Dendritic cell treated with granulocyte-macrophage colony-stimulating factor and Interleukin-4, amounts not matched to agents 40 ng/mL and 50 ng/mL, for 4 days (primary cell): ENCODE measurements at regions of chr4 and their contacts with region 1.

Region 1: GRCh38 chr4:113761620-113762185 is at the start of gene CAMK2D:
- H3K4me3 Mint-ChIP-seq: peak within 1 kb of the TSS; percentile 94
- H3K27ac Mint-ChIP-seq: peak within 1 kb of the TSS; percentile 99
- H3K4me1 Mint-ChIP-seq: peaks cover 16% of the 10 kb centered on the region
- H3K27me3 Mint-ChIP-seq: peaks cover 12% of the 10 kb centered on the region

Region 2: DNA sequence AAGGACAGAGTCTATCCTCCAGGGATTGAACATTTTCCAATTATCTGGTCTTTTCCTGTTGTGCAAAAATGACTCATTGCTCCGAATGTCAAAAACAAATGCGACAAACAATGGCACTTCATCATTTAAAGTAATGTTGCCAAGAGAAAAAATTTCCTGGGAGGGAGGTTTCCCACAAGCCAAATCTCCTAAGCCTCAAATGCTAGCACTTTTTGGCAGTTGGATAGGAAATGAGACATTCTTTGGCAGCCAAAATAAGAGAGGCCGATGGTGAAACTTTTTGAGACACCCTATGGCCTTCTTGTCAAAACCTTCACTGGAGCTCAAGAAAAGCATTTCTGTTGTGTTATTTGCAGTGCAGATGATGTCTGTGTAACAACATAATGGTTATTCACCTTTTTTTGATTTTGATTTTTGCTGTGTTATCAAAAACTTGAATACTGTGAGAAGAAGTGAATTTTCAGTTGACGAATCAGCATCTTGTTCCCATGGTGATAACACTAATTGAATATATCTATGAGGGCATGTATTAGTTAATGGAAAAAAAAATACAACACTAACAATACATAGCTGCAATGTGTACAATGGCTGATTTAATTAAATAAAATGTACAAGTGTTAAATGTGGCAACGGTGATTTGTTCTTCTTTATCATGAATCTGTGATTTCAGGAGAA is 378.5 kb before region 1 on chr4:
- intact Hi-C with region 1: no loop called
- H3K4me3 Mint-ChIP-seq: no peak overlapping the region
- H3K27ac Mint-ChIP-seq: no peak overlapping the region
- H3K4me1 Mint-ChIP-seq: no peaks in the 10 kb centered on the region
- H3K27me3 Mint-ChIP-seq: no peaks in the 10 kb centered on the region

Region 3: DNA sequence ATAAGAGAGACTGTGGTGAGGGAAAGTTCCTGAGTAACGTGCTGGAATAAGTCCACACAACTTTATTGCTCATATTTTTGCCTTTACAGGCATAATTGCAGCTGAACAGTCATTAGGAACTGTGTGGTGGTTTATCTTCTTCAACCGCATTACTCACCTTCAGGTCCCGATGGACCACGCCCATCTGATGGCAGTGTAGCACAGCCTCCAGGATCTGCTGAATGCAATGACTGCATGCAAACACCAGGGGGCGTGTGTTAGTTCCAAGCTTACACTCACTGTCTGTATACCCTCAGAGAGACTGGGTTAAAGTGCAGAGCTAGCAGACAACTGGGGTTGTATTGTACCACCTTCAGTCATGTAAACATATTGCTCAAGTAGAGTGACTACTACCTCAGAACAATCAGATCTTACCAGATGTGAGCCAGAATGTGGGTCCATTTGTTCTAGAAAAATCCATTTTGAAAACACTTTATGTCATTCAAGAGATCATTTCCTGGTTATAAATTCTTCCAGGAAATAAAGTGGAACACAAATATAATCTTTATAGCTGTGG is 214.1 kb before region 1 on chr4:
- intact Hi-C with region 1: loop called (anchors 2 kb)
- H3K4me3 Mint-ChIP-seq: no peak overlapping the region
- H3K27ac Mint-ChIP-seq: no peak overlapping the region
- H3K4me1 Mint-ChIP-seq: no peaks in the 10 kb centered on the region
- H3K27me3 Mint-ChIP-seq: no peaks in the 10 kb centered on the region

Region 4: GRCh38 chr4:113781439-113782040 is 19.8 kb after region 1 on chr4:
- intact Hi-C with region 1: loop called (anchors 2 kb)
- H3K4me3 Mint-ChIP-seq: no peak overlapping the region
- H3K27ac Mint-ChIP-seq: no peak overlapping the region
- H3K4me1 Mint-ChIP-seq: peaks cover 21% of the 10 kb centered on the region
- H3K27me3 Mint-ChIP-seq: peaks cover 2% of the 10 kb centered on the region

Region 5: DNA sequence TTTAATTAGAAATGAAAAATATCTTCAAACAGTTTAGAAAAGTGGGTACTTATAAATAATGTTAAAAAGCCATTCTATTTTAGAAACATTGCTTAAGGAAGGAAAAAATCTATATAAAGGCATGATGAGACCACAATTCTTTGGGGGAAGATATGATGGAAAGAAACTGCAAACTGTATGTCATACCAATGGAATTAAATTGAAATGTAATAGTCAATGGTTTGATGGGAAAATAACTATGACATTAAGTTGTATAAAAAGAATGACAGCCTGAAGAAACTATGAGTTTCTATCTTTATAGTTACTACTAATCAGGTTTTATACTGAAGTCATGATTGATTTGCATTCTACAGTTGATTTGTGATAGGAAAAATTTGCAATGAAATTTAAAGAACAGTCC is 40.2 kb after region 1 on chr4:
- intact Hi-C with region 1: no loop called
- H3K4me3 Mint-ChIP-seq: no peak overlapping the region
- H3K27ac Mint-ChIP-seq: no peak overlapping the region
- H3K4me1 Mint-ChIP-seq: no peaks in the 10 kb centered on the region
- H3K27me3 Mint-ChIP-seq: no peaks in the 10 kb centered on the region

Region 6: DNA sequence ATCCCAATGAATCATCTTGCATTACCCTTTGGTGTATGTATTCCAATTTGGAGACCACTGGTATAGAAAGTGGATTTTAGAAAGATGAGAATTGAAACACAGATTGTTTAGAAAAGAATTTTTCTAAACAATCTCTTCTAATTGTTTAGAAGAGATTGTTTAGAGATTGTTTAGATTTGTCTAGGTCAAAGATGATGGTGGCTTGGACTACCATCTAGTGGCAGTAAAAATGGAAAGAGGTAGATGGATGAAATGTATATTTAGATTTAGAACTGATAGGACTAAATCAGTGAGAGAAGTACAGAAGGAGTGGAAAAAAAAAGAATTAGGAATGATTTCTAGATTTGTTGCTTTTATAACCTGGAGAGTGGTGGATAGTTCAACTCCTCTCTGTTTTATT is 147.1 kb after region 1 on chr4:
- intact Hi-C with region 1: loop called (anchors 5 kb)
- H3K4me3 Mint-ChIP-seq: no peak overlapping the region
- H3K27ac Mint-ChIP-seq: no peak overlapping the region
- H3K4me1 Mint-ChIP-seq: no peaks in the 10 kb centered on the region
- H3K27me3 Mint-ChIP-seq: peaks cover 3% of the 10 kb centered on the region